Left ventricle myocardium superior (tissue), 1 donor: ENCODE measurements at regions of chr16 and their contacts with region 1.

Region 1: DNA sequence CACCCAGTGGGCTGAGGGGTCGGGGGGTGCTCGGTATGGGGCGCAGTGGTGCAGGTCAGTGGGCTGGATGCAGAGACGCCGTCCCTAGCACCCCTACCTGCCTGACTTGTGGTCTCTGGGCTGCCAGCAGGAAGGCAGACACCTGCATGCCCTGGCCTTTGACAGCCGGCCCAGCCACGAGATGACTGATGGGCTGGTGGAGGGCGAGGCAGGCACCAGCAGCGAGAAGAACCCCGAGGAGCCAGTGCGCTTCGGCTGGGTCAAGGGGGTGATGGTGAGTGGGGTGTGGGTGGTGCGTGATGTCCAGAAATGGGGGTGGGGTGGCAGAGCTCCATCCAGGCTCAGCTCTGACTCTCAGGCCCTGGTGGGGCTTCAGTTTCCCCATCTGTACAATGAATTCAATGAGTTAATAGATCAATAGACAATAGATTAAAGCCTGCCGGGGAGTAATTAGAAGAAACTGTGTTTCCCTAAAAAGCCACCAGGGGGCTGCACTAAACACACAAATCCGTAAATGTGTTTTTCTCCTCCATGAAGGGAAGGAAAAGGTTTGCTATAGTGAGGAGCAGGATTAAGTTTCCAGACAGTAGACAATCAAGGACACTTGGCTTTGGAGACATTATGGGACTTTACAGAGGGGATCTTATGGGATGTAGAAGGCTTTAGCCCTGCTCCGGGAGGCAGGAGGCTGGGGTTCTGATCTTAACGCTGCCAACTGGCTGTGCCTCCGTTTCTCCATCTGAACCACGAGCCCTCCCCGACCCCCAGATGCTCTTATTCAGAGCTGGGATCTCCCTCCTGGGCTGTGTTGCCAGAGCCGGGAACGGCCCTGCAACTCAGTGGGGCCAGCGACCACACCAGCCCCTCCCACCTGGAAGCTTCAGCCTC is 2.2 kb downstream of the SLC12A3 start:
- DNase-seq: no peak
- ATAC-seq: peak; percentile 36

Region 2: GRCh38 chr16:56722200-56722842 is 144.9 kb before region 1 on chr16:
- intact Hi-C with region 1: no loop called
- DNase-seq: no peak
- ATAC-seq: no peak

Region 3: DNA sequence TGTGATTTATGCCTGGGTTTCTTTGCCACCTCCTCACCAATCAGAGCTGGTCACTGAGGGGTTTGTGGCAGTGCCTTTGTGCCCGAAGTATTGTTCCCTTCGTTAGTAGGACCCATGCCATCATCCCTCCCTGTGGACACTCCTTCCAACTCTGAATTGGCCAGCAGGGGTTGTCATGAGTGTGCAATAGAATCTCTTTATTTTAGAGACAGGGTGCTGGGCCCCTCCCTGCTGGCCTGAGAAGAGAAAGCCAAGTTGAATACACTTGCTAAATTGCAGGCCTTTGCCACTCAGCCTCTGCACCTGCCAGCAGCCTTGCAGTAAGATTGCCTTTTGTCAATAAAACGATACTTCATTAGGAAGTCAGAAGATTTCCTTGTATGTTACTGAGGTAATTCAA is 42.9 kb before region 1 on chr16:
- intact Hi-C with region 1: no loop called
- DNase-seq: peak; percentile 29
- ATAC-seq: peak; percentile 87

Region 4: GRCh38 chr16:56931892-56932720 is 64.9 kb after region 1 on chr16 and contains the start of gene HERPUD1:
- intact Hi-C with region 1: loop called (anchors 10 kb)
- DNase-seq: peak; percentile 99
- ATAC-seq: peak; percentile 95
- total RNA-seq, gene HERPUD1: 129 TPM

Region 5: GRCh38 chr16:57045694-57046381 is 178.7 kb after region 1 on chr16:
- intact Hi-C with region 1: loop called (anchors 10 kb)
- DNase-seq: peak; percentile 81
- ATAC-seq: peak; percentile 87